K562 (cell line): ENCODE measurements at regions of chr10 and their contacts with region 1.

Region 1: GRCh38 chr10:73743905-73744663 is at the start of gene SEC24C:
- DNase-seq: peak; percentile 98 to 99 (median 98)
- ATAC-seq: peak; percentile 91
- H3K4me3 ChIP-seq: peak within 1 kb of the TSS; percentile 72
- H3K27ac ChIP-seq: peak within 1 kb of the TSS; percentile 99
- H3K4me1 ChIP-seq: peaks cover 5 to 24% of the 10 kb centered on the region in 2 experiments; a peak in 3 of 5 replicates
- H3K27me3 ChIP-seq: no peaks in the 10 kb centered on the region
- CTCF ChIP-seq: no peak
- EP300 ChIP-seq: no peak; the same call in 1 of the 2 replicates
- POLR2A ChIP-seq: peak; percentile 98
- RAD21 ChIP-seq: 0 out of 4 replicates have a peak, but pooled peaks of 1 of the 2 experiments have one; percentile 11
- polyA plus RNA-seq, gene SEC24C: 19.0 to 88.4 TPM

Region 2: DNA sequence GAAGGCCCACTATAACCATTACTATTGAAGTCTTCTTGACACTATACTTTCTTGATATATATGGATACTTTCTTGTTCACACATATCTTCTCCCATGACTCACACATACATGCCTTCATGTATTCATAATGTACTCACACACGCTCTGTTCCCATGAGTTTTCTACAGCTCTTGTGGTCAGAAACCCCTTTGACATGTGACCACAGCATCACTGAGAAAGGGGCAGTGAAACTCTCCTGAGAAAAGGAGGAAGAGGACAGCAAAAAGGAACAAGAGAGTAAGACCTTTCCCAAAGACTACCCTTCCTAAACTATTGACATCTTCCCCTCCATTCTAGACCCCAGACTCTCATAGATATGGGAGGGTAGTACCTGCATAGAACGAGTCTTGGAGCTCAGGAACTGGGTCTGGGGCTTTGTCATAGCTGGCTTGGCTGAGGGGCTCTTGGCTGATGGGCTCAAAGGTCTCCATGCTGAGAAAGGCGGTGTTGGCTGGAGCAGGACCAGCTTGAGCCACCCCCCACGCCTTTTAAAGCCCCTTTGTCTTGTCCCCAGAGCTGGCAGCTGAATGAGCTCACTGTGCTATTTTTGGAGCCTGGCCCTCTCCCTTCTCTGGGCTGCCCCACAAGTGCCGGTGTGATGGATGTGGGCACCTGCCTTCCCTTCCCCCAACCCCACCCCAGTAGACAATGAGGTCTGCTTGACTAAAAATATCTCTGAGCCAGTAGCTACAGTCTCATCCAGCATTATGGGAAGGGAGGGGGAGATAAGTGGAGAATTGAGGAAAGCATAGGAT is 93.3 kb before region 1 on chr10:
- CTCF ChIA-PET with region 1: no interaction called
- POLR2A ChIA-PET with region 1: interaction called, 3 read pairs
- in situ Hi-C with region 1: no loop called
- intact Hi-C with region 1: loop called (anchors 5 kb)
- DNase-seq: peak in 1 of 4 experiments; percentile 14
- ATAC-seq: no peak
- H3K4me3 ChIP-seq: no peak overlapping the region
- H3K27ac ChIP-seq: peak overlapping the region; percentile 40; the same call in 1 of the 3 replicates
- H3K4me1 ChIP-seq: peaks cover 44 to 51% of the 10 kb centered on the region in 2 experiments
- H3K27me3 ChIP-seq: no peaks in the 10 kb centered on the region
- CTCF ChIP-seq: no peak
- EP300 ChIP-seq: no peak
- POLR2A ChIP-seq: no peak
- RAD21 ChIP-seq: no peak

Region 3: GRCh38 chr10:73730153-73730906 is 13.8 kb before region 1 on chr10:
- CTCF ChIA-PET with region 1: no interaction called
- POLR2A ChIA-PET with region 1: interaction called, 118 read pairs
- in situ Hi-C with region 1: no loop called
- intact Hi-C with region 1: no loop called
- DNase-seq: peak; percentile 63 to 97 (median 78)
- ATAC-seq: peak; percentile 93
- H3K4me3 ChIP-seq: peak overlapping the region; percentile 96
- H3K27ac ChIP-seq: peak overlapping the region; percentile 97
- H3K4me1 ChIP-seq: peaks cover 0 to 22% of the 10 kb centered on the region in 2 experiments; a peak in 3 of 5 replicates
- H3K27me3 ChIP-seq: no peaks in the 10 kb centered on the region
- CTCF ChIP-seq: 0 out of 6 replicates have a peak, but pooled peaks of 1 of the 3 experiments have one; percentile 3
- EP300 ChIP-seq: no peak
- POLR2A ChIP-seq: peak; percentile 99
- RAD21 ChIP-seq: 0 out of 4 replicates have a peak, but pooled peaks of 1 of the 2 experiments have one; percentile 14

Region 4: DNA sequence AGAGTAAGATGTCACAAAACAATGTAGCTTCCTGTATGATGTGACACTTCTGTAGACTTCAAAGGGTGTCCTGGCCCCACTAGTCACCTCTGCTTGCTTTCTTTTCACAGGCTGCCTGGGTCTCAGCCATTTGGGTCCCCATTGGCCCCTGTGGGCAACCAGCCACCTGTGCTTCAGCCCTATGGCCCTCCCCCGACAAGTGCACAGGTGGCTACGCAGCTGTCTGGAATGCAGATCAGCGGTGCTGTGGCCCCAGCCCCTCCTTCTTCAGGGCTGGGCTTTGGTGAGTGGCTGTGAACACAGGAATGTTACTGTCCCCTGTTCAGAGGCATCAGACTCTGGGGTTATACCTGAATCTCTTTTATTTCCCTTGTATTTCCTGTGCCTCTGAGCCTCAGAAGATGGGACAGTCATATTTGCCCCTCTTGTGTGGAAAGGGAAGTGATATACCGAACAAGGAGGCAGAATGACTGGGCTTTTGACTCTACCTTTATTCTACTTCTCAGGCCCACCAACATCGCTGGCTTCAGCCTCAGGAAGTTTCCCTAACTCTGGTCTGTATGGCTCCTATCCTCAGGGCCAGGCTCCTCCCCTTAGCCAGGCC is 15.5 kb after region 1 on chr10:
- CTCF ChIA-PET with region 1: no interaction called
- POLR2A ChIA-PET with region 1: interaction called, 34 read pairs
- in situ Hi-C with region 1: no loop called
- intact Hi-C with region 1: no loop called
- DNase-seq: no peak
- ATAC-seq: no peak
- H3K4me3 ChIP-seq: no peak overlapping the region
- H3K27ac ChIP-seq: no peak overlapping the region
- H3K4me1 ChIP-seq: peaks cover 5 to 8% of the 10 kb centered on the region in 2 experiments; a peak in 4 of 5 replicates
- H3K27me3 ChIP-seq: no peaks in the 10 kb centered on the region
- CTCF ChIP-seq: no peak
- EP300 ChIP-seq: no peak
- POLR2A ChIP-seq: no peak
- RAD21 ChIP-seq: no peak

Region 5: GRCh38 chr10:74021248-74022055 is 277.4 kb after region 1 on chr10:
- CTCF ChIA-PET with region 1: no interaction called
- POLR2A ChIA-PET with region 1: no interaction called
- in situ Hi-C with region 1: no loop called
- intact Hi-C with region 1: no loop called
- DNase-seq: peak in 3 of 4 experiments; percentile 45 to 80 (median 77)
- ATAC-seq: peak; percentile 81
- H3K4me3 ChIP-seq: peak overlapping the region; percentile 11; the same call in 1 of the 2 replicates
- H3K27ac ChIP-seq: peak overlapping the region; percentile 95
- H3K4me1 ChIP-seq: peaks cover 22 to 70% of the 10 kb centered on the region in 2 experiments
- H3K27me3 ChIP-seq: no peaks in the 10 kb centered on the region
- CTCF ChIP-seq: no peak
- EP300 ChIP-seq: peak; percentile 98
- POLR2A ChIP-seq: no peak
- RAD21 ChIP-seq: no peak; a peak in 2 of 4 replicates